ENCODE measurements at regions of chr17 and their contacts with region 1.

Region 1: GRCh38 chr17:1365445-1366039 is 34.5 kb downstream of the YWHAE start:
- DNase-seq: no peak
- ATAC-seq: peak; percentile 65

Region 2: DNA sequence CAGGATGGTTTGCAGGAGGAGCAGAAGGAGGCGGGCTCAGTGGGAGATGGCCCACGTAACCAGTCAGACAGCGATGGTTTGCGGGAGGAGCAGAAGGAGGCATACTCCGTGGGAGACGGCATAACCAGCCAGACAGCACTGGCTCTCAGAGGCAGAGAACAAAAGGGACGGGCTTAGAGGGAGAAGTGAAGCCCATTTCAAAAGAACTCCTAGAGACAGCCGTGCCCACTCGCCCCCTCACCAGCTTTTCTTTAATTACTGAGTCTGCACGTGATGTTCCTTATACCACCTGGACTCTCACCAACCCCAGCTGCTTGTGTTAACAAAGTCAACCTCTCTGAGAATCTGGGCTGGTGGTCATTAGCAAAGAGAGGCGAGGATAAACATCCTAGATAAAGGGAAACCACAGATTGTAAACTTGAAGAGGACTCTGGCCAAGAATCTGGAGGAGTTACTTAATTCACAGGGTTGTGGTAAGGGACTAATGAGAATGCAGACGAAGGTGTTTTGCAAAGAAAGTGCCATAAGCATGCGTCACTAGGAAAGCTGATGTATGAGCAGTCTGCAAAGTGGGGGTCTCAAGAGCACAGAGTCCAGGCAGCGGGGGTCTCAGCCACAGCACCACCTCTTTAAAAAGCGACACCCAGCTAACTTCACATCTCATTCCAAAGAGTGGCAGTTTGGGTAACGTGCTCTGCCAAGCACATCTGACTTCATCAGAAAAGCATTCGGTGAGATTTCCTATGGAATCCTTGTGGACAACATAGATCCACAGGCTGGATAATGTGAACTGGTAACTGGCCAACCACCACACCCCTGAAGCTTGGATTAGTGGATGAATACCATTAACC is 437.7 kb before region 1 on chr17:
- intact Hi-C with region 1: no loop called
- DNase-seq: no peak
- ATAC-seq: no peak

Region 3: GRCh38 chr17:1323336-1323735 is 42.2 kb before region 1 on chr17:
- intact Hi-C with region 1: no loop called
- DNase-seq: no peak
- ATAC-seq: no peak

Region 4: GRCh38 chr17:1399679-1400512 is 34.4 kb after region 1 on chr17 and contains the start of gene YWHAE:
- intact Hi-C with region 1: loop called (anchors 5 kb)
- DNase-seq: peak; percentile 99
- ATAC-seq: peak; percentile 98
- total RNA-seq, gene YWHAE: 640 TPM